ENCODE measurements at regions of chr7 and their contacts with region 1.

Region 1: DNA sequence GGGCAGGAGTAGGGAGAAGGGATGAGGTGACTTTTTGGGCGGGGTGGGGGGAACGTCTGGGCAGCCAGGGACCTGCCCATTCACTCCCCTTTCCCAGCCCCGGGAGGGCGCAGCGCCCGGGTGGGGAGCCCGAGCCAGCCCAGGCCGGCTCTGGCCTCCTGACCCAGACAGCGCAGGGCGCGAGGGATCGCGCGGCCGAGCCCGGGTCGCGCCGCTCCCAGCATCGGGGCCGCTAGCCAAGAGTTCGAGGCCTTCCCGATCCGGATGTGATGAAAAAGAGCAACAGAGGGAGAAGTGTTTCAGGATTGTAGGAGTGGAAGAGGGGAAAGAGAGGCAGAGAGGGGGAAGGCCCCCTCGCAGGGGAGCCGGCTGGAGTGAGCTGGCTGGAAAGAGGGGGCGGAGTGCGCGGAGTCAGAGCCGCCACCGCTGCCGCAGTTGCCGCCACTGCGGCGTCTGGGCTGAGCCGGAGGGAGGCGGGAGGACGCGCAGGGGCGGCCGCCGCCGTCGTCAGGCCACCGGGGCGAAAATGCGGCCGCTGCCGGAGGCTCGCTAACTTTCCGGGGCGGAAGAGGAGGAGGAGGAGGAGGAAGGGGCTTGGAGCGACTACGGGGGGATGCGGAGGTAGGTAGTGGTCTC is at the start of gene MDFIC:
- DNase-seq: peak; percentile 42 to 84 (median 48)
- ATAC-seq: peak; percentile 73
- H3K4me3 ChIP-seq: peak within 1 kb of the TSS; percentile 80
- H3K4me3 Mint-ChIP-seq: peak within 1 kb of the TSS; percentile 85 to 99 (median 92)
- H3K27ac ChIP-seq: peak within 1 kb of the TSS; percentile 86
- H3K27ac Mint-ChIP-seq: peak within 1 kb of the TSS; percentile 86 to 97 (median 93)
- H3K4me1 ChIP-seq: peaks cover 15 to 21% of the 10 kb centered on the region in 2 donors
- H3K4me1 Mint-ChIP-seq: peaks cover 25 to 53% (median 46%) of the 10 kb centered on the region in 7 donors
- H3K27me3 ChIP-seq: no peaks in the 10 kb centered on the region
- H3K27me3 Mint-ChIP-seq: no peaks in the 10 kb centered on the region
- total RNA-seq, gene MDFIC: 48.5 to 84.5 (median 57.0) TPM

Region 2: DNA sequence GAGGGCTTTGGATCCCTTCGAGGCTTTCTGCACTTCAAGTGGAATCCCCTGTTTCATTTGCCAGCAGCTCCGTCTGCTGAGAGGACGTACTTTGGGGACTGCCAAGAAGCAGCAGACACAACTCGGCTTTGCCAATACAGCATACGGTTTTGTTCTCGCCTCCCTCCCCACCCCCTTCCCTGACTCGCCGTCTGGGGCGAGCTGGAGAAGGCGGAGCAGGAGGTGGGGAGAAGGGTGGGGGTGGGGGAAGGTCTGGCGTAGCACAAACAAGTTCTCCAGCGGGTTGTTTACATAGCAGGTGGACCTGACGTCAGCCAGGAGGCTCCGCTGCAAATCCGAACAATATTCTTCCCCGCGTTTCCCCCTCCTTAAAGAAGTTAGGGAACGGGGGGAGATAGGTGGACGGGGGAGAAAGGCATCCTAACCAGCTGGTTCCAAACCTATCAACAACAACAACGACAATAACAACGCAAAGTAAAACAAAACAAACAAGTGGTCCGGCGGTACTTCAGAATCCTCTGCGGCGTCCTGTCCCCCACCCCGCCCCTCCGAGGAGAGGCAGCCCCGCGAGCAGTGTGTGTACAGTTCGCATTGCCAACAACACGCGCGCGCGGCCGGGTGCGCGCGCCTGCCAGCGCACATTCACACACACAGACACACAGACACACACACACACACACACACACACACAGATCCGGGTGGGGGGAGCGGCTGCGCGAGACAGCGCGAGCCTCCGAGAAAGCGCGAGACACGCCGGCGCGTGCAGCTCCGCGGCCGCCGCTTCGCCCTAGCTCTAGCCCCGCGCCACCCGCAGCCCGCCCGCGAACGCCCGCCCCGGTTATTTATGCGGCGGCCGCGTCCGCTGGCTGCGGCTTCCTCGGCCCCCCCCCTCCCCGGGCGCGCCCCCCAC is 836.3 kb before region 1 on chr7:
- CTCF ChIA-PET with region 1: no interaction called
- POLR2A ChIA-PET with region 1: no interaction called
- intact Hi-C with region 1: loop called in 1 of 2 experiments (anchors 10 kb)
- DNase-seq: peak in 2 of 9 donors; percentile 4 to 40
- ATAC-seq: peak; percentile 49
- H3K4me3 ChIP-seq: peak overlapping the region; percentile 42
- H3K4me3 Mint-ChIP-seq: peak overlapping the region; percentile 61 to 90 (median 76)
- H3K27ac ChIP-seq: no peak overlapping the region
- H3K27ac Mint-ChIP-seq: peak overlapping the region in 1 of 9 donors; percentile 84
- H3K4me1 ChIP-seq: peaks cover 17 to 21% of the 10 kb centered on the region in 2 donors
- H3K4me1 Mint-ChIP-seq: peaks cover 6 to 53% (median 37%) of the 10 kb centered on the region in 7 donors
- H3K27me3 ChIP-seq: peaks cover 8 to 18% of the 10 kb centered on the region in 2 donors
- H3K27me3 Mint-ChIP-seq: peaks cover 67 to 81% (median 77%) of the 10 kb centered on the region in 5 donors

Region 3: GRCh38 chr7:114589436-114589835 is 332.7 kb before region 1 on chr7:
- CTCF ChIA-PET with region 1: no interaction called
- POLR2A ChIA-PET with region 1: no interaction called
- intact Hi-C with region 1: no loop called
- DNase-seq: no peak
- ATAC-seq: no peak
- H3K4me3 ChIP-seq: no peak overlapping the region
- H3K4me3 Mint-ChIP-seq: no peak overlapping the region
- H3K27ac ChIP-seq: no peak overlapping the region
- H3K27ac Mint-ChIP-seq: no peak overlapping the region
- H3K4me1 ChIP-seq: no peaks in the 10 kb centered on the region
- H3K4me1 Mint-ChIP-seq: no peaks in the 10 kb centered on the region
- H3K27me3 ChIP-seq: no peaks in the 10 kb centered on the region
- H3K27me3 Mint-ChIP-seq: no peaks in the 10 kb centered on the region

Region 4: GRCh38 chr7:114953724-114954123 is 31.6 kb after region 1 on chr7:
- CTCF ChIA-PET with region 1: no interaction called
- POLR2A ChIA-PET with region 1: interaction called, 4 read pairs
- intact Hi-C with region 1: loop called (anchors 2 to 5 kb)
- DNase-seq: no peak
- ATAC-seq: no peak
- H3K4me3 ChIP-seq: no peak overlapping the region
- H3K4me3 Mint-ChIP-seq: no peak overlapping the region
- H3K27ac ChIP-seq: no peak overlapping the region
- H3K27ac Mint-ChIP-seq: peak overlapping the region in 1 of 9 donors; percentile 6
- H3K4me1 ChIP-seq: peaks cover 18 to 34% of the 10 kb centered on the region in 2 donors
- H3K4me1 Mint-ChIP-seq: peaks cover 42 to 75% (median 55%) of the 10 kb centered on the region in 7 donors
- H3K27me3 ChIP-seq: no peaks in the 10 kb centered on the region
- H3K27me3 Mint-ChIP-seq: no peaks in the 10 kb centered on the region

Region 5: DNA sequence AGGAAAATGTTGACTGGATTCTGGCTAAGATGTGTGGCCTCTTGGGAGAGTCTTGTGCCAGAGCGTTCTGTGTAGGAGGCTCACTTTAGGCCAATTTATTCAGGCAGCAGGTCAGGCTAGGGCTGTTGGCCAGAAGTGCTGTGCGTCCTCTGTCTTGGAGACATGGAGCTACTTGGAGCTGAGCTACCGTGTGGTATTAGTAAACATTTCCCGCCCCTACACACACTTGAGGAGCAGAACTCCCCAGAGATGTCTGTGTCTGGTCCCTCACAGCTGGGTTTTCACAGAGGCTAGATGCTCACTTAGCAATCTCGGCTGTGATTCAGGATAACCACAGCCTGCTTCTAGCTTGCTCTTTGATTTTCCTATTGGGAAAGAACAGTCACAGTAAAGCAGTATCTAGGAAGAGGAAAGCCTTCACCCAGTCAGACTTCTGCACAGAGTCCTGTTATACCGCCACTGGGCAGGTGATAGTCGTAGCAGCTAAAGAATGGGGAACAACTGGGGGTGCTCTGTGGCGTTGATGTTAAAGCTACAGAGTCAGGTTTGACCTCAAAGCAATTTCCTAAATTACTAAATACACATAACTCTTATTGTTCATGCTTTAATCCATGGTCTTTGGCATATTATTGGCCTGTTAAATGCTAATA is 86.5 kb after region 1 on chr7:
- CTCF ChIA-PET with region 1: no interaction called
- POLR2A ChIA-PET with region 1: interaction called, 3 read pairs
- intact Hi-C with region 1: loop called (anchors 1 to 5 kb)
- DNase-seq: peak in 1 of 9 donors; percentile 23
- ATAC-seq: peak; percentile 58
- H3K4me3 ChIP-seq: peak overlapping the region; percentile 25
- H3K4me3 Mint-ChIP-seq: peak overlapping the region; percentile 53 to 85 (median 76)
- H3K27ac ChIP-seq: peak overlapping the region; percentile 54
- H3K27ac Mint-ChIP-seq: peak overlapping the region; percentile 56 to 94 (median 88)
- H3K4me1 ChIP-seq: peaks cover 53 to 75% of the 10 kb centered on the region in 2 donors
- H3K4me1 Mint-ChIP-seq: peaks cover 48 to 94% (median 86%) of the 10 kb centered on the region in 7 donors
- H3K27me3 ChIP-seq: no peaks in the 10 kb centered on the region
- H3K27me3 Mint-ChIP-seq: no peaks in the 10 kb centered on the region

Region 6: GRCh38 chr7:115217373-115217772 is 295.2 kb after region 1 on chr7:
- CTCF ChIA-PET with region 1: no interaction called
- POLR2A ChIA-PET with region 1: no interaction called
- intact Hi-C with region 1: loop called in 1 of 2 experiments (anchors 1 kb)
- DNase-seq: peak in 1 of 9 donors; percentile 21
- ATAC-seq: peak; percentile 41
- H3K4me3 ChIP-seq: no peak overlapping the region
- H3K4me3 Mint-ChIP-seq: no peak overlapping the region
- H3K27ac ChIP-seq: no peak overlapping the region
- H3K27ac Mint-ChIP-seq: no peak overlapping the region
- H3K4me1 ChIP-seq: peaks cover 0 to 11% of the 10 kb centered on the region in 2 donors
- H3K4me1 Mint-ChIP-seq: peaks cover 0 to 11% (median 5%) of the 10 kb centered on the region in 7 donors
- H3K27me3 ChIP-seq: no peaks in the 10 kb centered on the region
- H3K27me3 Mint-ChIP-seq: peaks cover 0 to 10% (median 0%) of the 10 kb centered on the region in 5 donors